A549 (cell line): ENCODE measurements at regions of chr4 and their contacts with region 1.

Region 1: GRCh38 chr4:2763511-2763967 is 7.4 kb upstream of the TNIP2 start:
- DNase-seq: no peak
- ATAC-seq: no peak
- H3K4me3 ChIP-seq: peak overlapping the region; percentile 50; the same call in 2 of the 3 replicates
- H3K27ac ChIP-seq: peak overlapping the region; percentile 74 to 88; a peak in 5 of 6 replicates
- H3K4me1 ChIP-seq: peaks cover 13% of the 10 kb centered on the region
- CTCF ChIP-seq: no peak
- EP300 ChIP-seq: no peak
- POLR2A ChIP-seq: no peak
- RAD21 ChIP-seq: no peak

Region 2: GRCh38 chr4:2750693-2751605 is 12.6 kb before region 1 on chr4:
- CTCF ChIA-PET with region 1: interaction called, 14 read pairs
- POLR2A ChIA-PET with region 1: no interaction called
- DNase-seq: no peak
- ATAC-seq: no peak
- H3K4me3 ChIP-seq: no peak overlapping the region
- H3K27ac ChIP-seq: no peak overlapping the region
- H3K4me1 ChIP-seq: peaks cover 22% of the 10 kb centered on the region
- CTCF ChIP-seq: no peak
- EP300 ChIP-seq: no peak
- POLR2A ChIP-seq: no peak
- RAD21 ChIP-seq: no peak

Region 3: DNA sequence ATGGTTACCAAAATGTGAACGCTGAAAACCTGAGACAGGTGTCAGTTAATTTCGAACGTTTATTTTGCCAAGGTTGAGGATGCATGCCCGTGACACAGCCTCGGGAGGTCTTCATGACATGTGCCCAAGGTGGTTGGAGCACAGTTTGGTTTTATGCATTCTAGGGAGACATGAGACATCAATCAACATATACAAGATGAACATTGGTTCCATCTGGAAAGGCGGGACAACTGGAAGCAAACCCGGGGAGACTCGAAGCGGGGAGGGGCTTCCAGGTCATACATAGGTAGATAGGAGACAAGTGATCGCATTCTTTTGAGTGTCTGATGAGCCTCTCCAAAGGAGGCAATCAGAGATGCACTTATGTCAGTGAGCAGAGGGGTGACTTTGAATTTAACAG is 18.4 kb after region 1 on chr4:
- CTCF ChIA-PET with region 1: interaction called, 10 read pairs
- POLR2A ChIA-PET with region 1: no interaction called
- DNase-seq: no peak
- ATAC-seq: no peak
- H3K4me3 ChIP-seq: no peak overlapping the region
- H3K27ac ChIP-seq: no peak overlapping the region
- H3K4me1 ChIP-seq: no peaks in the 10 kb centered on the region
- CTCF ChIP-seq: no peak
- EP300 ChIP-seq: no peak
- POLR2A ChIP-seq: no peak
- RAD21 ChIP-seq: no peak